Aorta (tissue), 5 donors: ENCODE measurements at regions of chr1 and their contacts with region 1.

Region 1: DNA sequence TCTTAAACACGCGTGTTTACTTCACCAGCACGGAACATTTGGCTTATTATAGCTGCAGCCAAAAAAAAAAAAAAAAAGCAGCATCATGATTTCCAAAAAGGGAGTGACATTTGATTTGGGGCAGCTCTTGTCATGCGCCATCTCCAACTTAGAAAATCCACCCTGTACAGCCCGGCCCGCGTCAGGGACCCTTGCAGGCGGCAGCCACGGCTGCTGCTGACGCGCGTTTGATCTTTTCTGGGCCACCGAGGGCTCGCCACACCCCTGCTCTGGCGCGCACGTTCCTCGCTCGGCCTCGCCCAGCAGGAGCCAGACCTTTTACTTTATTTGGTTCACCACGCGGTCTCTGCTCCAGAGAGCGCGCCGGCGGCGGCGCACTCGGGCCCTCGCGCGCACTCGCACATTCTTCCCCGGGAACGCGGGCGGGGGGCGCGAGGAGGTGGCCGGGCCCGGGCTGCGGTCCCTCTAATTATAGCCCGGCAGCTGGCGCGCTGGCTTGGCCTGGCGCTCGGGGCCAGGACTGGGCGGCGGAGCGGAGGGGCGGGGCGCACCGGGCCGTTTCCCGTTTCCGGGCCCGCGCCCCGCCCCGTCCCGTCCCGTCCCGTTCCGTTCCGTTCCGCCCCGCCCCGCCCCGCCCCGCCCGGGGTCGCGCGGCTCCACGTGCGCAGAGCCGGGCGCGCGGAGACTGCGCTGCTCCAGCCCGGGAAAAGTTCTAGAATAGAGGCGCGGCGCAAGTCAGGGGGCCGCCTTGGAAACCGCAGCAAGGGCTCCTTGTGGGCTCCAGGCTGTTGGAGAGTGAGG is 10.2 kb downstream of the IRF2BP2 start:
- DNase-seq: peak; percentile 91 to 96
- ATAC-seq: peak; percentile 94
- H3K4me3 ChIP-seq: peak overlapping the region in 1 of 2 donors; percentile 69
- H3K27ac ChIP-seq: peak overlapping the region; percentile 64 to 94
- H3K4me1 ChIP-seq: peaks cover 0 to 4% of the 10 kb centered on the region in 2 donors
- H3K27me3 ChIP-seq: no peaks in the 10 kb centered on the region

Region 2: DNA sequence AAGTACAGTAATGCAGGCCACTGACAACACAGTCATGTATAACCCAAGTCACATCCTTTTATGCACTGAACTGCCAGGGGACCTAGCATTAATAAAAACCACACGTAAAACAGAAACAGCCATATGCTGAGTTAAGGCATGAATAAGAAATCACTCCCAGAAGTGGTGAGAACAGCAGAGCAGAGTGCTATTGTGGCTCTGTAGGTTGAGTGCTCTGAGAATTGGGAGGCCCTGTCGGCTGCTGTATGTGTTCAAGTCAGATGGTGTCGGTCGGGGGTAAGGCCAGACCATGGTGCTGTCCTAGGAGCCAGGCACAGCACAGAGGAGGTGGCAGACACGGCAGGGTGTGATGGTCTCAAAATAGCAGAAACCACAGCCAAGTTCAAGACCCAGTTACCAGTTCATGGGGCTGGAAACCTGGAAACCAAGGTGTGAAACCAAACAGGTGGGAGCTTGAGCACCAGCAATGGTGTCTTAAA is 353.1 kb before region 1 on chr1:
- intact Hi-C with region 1: no loop called
- DNase-seq: no peak
- ATAC-seq: no peak
- H3K4me3 ChIP-seq: no peak overlapping the region
- H3K27ac ChIP-seq: no peak overlapping the region
- H3K4me1 ChIP-seq: no peaks in the 10 kb centered on the region
- H3K27me3 ChIP-seq: no peaks in the 10 kb centered on the region

Region 3: GRCh38 chr1:234533975-234534876 is 65.6 kb before region 1 on chr1:
- intact Hi-C with region 1: loop called (anchors 5 kb)
- DNase-seq: peak; percentile 94 to 97
- ATAC-seq: peak; percentile 21
- H3K4me3 ChIP-seq: no peak overlapping the region
- H3K27ac ChIP-seq: peak overlapping the region; percentile 97 to 99
- H3K4me1 ChIP-seq: peaks cover 3 to 18% of the 10 kb centered on the region in 2 donors
- H3K27me3 ChIP-seq: no peaks in the 10 kb centered on the region

Region 4: DNA sequence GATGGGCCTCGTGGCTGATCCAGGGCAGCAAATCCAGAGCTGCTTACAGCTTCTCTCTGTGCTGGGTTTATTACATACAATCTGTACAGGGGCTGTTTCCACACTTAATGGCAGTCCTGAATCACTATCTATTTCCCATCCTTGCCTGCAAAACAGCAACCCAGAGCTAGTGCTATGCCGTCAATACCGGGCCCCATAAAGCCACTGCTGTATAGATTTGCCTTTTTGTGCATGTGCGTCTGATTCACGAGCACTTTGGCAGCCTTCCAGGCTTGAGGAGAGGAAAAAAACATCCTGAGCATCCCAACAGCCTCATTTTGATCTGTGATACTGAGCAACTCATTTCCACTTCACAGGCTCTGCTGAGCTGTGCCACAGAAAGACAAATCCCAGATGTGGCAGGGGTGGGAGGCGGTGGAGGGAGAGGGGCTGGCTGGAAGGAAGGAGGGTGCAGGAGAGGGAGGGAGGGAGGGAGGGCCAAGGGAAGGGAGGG is 55.7 kb before region 1 on chr1:
- intact Hi-C with region 1: loop called in 1 of 2 experiments (anchors 5 kb)
- DNase-seq: peak; percentile 80 to 85
- ATAC-seq: peak; percentile 72
- H3K4me3 ChIP-seq: no peak overlapping the region
- H3K27ac ChIP-seq: peak overlapping the region in 1 of 2 donors; percentile 27
- H3K4me1 ChIP-seq: peaks cover 0 to 5% of the 10 kb centered on the region in 2 donors
- H3K27me3 ChIP-seq: no peaks in the 10 kb centered on the region

Region 5: GRCh38 chr1:234564642-234565037 is 35.2 kb before region 1 on chr1:
- intact Hi-C with region 1: no loop called
- DNase-seq: no peak
- ATAC-seq: no peak
- H3K4me3 ChIP-seq: no peak overlapping the region
- H3K27ac ChIP-seq: no peak overlapping the region
- H3K4me1 ChIP-seq: no peaks in the 10 kb centered on the region
- H3K27me3 ChIP-seq: no peaks in the 10 kb centered on the region

Region 6: GRCh38 chr1:234579967-234580366 is 19.9 kb before region 1 on chr1:
- intact Hi-C with region 1: loop called in 1 of 2 experiments (anchors 2 kb)
- DNase-seq: no peak
- ATAC-seq: no peak
- H3K4me3 ChIP-seq: no peak overlapping the region
- H3K27ac ChIP-seq: no peak overlapping the region
- H3K4me1 ChIP-seq: peaks cover 0 to 4% of the 10 kb centered on the region in 2 donors
- H3K27me3 ChIP-seq: no peaks in the 10 kb centered on the region

Region 7: DNA sequence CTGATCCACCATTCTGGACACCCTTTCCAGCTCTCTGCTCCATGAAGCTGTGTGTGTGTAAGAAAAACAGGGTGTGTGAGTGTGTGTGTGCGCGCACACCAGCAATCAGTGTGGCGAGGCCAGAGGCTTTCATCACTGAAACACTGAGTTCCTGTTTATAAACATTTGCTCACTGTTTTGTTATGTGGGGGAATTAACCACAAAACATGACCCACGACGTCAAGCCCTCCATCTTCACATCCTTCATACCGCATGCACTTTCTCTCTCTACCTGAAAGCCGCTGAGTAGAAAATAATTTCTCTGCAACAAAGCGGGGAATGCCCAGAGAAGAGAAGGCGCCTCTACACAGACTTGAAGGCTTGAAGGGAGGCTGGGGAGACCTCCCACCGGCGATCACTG is 159.0 kb after region 1 on chr1:
- intact Hi-C with region 1: no loop called
- DNase-seq: no peak
- ATAC-seq: no peak
- H3K4me3 ChIP-seq: no peak overlapping the region
- H3K27ac ChIP-seq: no peak overlapping the region
- H3K4me1 ChIP-seq: no peaks in the 10 kb centered on the region
- H3K27me3 ChIP-seq: no peaks in the 10 kb centered on the region

Region 8: GRCh38 chr1:234862944-234863515 is 263.2 kb after region 1 on chr1:
- intact Hi-C with region 1: loop called in 1 of 2 experiments (anchors 10 kb)
- DNase-seq: peak; percentile 89 to 90
- ATAC-seq: peak; percentile 79
- H3K4me3 ChIP-seq: no peak overlapping the region
- H3K27ac ChIP-seq: peak overlapping the region; percentile 37 to 90
- H3K4me1 ChIP-seq: no peaks in the 10 kb centered on the region
- H3K27me3 ChIP-seq: no peaks in the 10 kb centered on the region